Calu3 (cell line): ENCODE measurements at regions of chr14 and their contacts with region 1.

Region 1: GRCh38 chr14:60775296-60775695 is 40.7 kb downstream of the MNAT1 start:
- DNase-seq: no peak
- H3K4me3 Mint-ChIP-seq: no peak overlapping the region
- H3K27ac Mint-ChIP-seq: no peak overlapping the region
- H3K4me1 Mint-ChIP-seq: peaks cover 7% of the 10 kb centered on the region
- H3K27me3 Mint-ChIP-seq: no peaks in the 10 kb centered on the region
- CTCF ChIP-seq: no peak

Region 2: DNA sequence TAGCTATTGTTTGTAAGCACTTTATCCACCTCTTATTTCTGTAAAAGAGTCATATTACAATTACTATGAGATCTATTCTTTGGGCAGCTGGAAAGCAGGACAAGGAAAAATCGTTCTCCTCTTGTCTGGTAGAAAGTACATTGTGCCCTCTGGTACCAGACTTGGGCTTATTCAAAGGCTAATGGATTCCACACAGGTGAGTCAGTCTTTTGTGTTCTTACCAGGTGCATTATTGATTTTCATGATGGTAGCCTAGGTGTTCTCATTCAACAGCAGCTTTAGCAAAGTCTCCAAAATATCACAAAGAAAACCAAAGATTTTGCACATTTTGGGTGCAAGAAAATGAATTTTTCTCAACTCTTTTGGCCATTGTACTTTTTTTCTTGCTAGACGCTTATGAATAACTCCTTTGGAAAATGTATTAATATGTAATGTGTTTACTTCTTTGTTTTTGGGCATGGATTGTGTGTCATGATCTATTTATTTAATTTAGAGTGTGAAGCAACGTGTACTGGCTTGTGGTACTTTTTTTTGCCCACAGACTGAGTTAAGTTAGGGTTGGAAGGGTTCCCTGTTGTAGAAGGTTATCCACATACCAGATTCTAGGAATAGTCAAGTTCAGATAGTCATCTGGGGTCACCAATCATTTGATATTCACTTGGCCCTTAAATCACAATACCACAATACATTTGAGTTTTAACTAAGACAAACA is 14.5 kb before region 1 on chr14:
- CTCF ChIA-PET with region 1: interaction called, 6 read pairs
- intact Hi-C with region 1: loop called (anchors 2 kb)
- DNase-seq: peak; percentile 52
- H3K4me3 Mint-ChIP-seq: no peak overlapping the region
- H3K27ac Mint-ChIP-seq: peak overlapping the region; percentile 81
- H3K4me1 Mint-ChIP-seq: peaks cover 49% of the 10 kb centered on the region
- H3K27me3 Mint-ChIP-seq: no peaks in the 10 kb centered on the region
- CTCF ChIP-seq: no peak

Region 3: DNA sequence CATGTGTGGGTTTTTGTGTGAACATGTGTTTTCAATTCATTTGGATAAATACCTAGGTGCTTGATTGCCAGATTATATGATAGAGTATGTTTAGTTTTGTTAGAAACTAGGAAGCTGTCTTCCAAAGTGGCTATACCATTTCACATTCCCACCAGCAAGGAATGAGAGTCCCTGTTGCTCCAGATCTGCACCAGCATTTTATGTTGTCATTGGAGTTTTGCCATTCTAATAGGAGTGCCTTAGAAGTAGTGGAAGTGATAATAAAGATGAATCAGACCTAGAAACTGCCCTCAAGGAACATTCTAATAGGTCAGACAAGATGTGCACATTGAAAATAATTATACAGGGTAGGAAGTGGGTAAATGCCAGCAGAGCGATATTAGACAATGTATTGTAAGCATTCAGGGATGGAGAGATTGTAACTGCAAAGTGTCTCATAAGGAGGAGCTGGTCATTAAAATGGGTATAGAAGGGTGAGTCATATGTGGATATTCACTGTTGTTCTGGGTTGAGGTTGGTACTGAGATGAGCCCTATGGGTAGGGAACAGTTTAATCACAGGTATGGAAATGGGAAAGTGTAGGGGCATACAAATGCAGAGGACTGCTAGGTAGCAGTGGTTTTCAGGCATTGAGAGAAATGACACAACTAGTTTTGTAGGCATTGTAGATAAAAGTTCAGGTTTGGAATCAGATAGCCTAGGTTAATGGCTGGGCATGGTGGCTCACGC is 30.7 kb after region 1 on chr14:
- CTCF ChIA-PET with region 1: no interaction called
- intact Hi-C with region 1: no loop called
- DNase-seq: no peak
- H3K4me3 Mint-ChIP-seq: no peak overlapping the region
- H3K27ac Mint-ChIP-seq: no peak overlapping the region
- H3K4me1 Mint-ChIP-seq: peaks cover 16% of the 10 kb centered on the region
- H3K27me3 Mint-ChIP-seq: no peaks in the 10 kb centered on the region
- CTCF ChIP-seq: no peak

Region 4: DNA sequence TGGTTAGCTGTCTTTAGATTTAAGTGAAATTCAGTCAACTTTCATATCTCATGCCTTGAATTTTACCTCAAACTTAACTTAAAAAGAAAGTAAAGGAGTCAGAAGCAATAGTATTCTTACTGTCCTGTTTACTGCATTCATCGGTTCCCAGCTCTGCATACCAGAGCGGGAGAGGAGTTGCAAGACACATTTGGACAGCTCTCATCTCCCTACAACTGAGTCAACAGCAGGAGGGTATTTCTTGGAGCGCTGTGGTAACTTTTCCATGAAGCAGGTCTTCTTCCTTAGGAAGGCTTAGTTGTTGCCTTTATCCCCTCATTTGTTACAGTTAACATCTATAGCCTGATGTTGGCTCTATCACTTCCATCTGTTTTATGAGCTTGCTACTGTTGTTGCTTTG is 140.5 kb after region 1 on chr14:
- CTCF ChIA-PET with region 1: no interaction called
- intact Hi-C with region 1: no loop called
- DNase-seq: no peak
- H3K4me3 Mint-ChIP-seq: no peak overlapping the region
- H3K27ac Mint-ChIP-seq: no peak overlapping the region
- H3K4me1 Mint-ChIP-seq: no peaks in the 10 kb centered on the region
- H3K27me3 Mint-ChIP-seq: no peaks in the 10 kb centered on the region
- CTCF ChIP-seq: no peak